Activated CD4-positive, alpha-beta memory T cell treated with anti-CD3 and anti-CD28 coated beads for 36 hours (primary cell): ENCODE measurements at regions of chr15 and their contacts with region 1.

Region 1: GRCh38 chr15:51888593-51889195 is 59.2 kb downstream of the TMOD3 start:
- DNase-seq: no peak
- H3K4me3 Mint-ChIP-seq: no peak overlapping the region
- H3K27ac Mint-ChIP-seq: no peak overlapping the region
- H3K4me1 Mint-ChIP-seq: peaks cover 2% of the 10 kb centered on the region
- H3K27me3 Mint-ChIP-seq: no peaks in the 10 kb centered on the region

Region 2: GRCh38 chr15:51861557-51862359 is 26.9 kb before region 1 on chr15:
- CTCF ChIA-PET with region 1: interaction called, 11 read pairs
- POLR2A ChIA-PET with region 1: no interaction called
- intact Hi-C with region 1: no loop called
- DNase-seq: peak; percentile 79
- H3K4me3 Mint-ChIP-seq: peak overlapping the region; percentile 36
- H3K27ac Mint-ChIP-seq: peak overlapping the region; percentile 61
- H3K4me1 Mint-ChIP-seq: peaks cover 66% of the 10 kb centered on the region
- H3K27me3 Mint-ChIP-seq: no peaks in the 10 kb centered on the region

Region 3: GRCh38 chr15:51904931-51905330 is 16.2 kb after region 1 on chr15:
- CTCF ChIA-PET with region 1: interaction called, 34 read pairs
- POLR2A ChIA-PET with region 1: no interaction called
- intact Hi-C with region 1: no loop called
- DNase-seq: no peak
- H3K4me3 Mint-ChIP-seq: no peak overlapping the region
- H3K27ac Mint-ChIP-seq: no peak overlapping the region
- H3K4me1 Mint-ChIP-seq: no peaks in the 10 kb centered on the region
- H3K27me3 Mint-ChIP-seq: no peaks in the 10 kb centered on the region

Region 4: DNA sequence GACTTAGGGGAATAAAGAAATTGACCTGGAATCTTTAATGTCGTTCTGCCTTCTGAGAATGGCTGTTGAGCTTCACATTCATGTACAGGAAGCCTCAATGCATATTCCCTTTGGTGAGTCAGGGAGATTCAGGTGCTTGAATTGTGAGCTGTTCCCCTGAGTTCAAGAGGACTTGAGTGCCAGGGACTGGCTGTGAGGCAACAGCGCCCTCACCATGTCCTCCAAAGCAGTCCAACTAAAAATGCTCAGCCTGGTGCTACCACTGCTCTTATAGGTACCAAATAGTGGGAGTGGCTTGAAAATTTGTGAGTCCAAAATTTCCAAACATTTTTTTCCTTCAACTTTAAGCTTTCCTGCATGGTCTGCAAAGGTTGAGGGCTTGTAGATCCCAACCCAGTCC is 28.8 kb after region 1 on chr15:
- CTCF ChIA-PET with region 1: interaction called, 10 read pairs
- POLR2A ChIA-PET with region 1: no interaction called
- intact Hi-C with region 1: no loop called
- DNase-seq: peak; percentile 25
- H3K4me3 Mint-ChIP-seq: no peak overlapping the region
- H3K27ac Mint-ChIP-seq: no peak overlapping the region
- H3K4me1 Mint-ChIP-seq: no peaks in the 10 kb centered on the region
- H3K27me3 Mint-ChIP-seq: no peaks in the 10 kb centered on the region

Region 5: GRCh38 chr15:52139599-52140491 is 251.2 kb after region 1 on chr15:
- CTCF ChIA-PET with region 1: interaction called, 4 read pairs
- POLR2A ChIA-PET with region 1: no interaction called
- intact Hi-C with region 1: loop called (anchors 1 kb)
- DNase-seq: peak; percentile 79
- H3K4me3 Mint-ChIP-seq: no peak overlapping the region
- H3K27ac Mint-ChIP-seq: no peak overlapping the region
- H3K4me1 Mint-ChIP-seq: peaks cover 16% of the 10 kb centered on the region
- H3K27me3 Mint-ChIP-seq: no peaks in the 10 kb centered on the region